Dorsolateral prefrontal cortex (tissue), 120 donors: ENCODE measurements at regions of chr20 and their contacts with region 1.

Region 1: DNA sequence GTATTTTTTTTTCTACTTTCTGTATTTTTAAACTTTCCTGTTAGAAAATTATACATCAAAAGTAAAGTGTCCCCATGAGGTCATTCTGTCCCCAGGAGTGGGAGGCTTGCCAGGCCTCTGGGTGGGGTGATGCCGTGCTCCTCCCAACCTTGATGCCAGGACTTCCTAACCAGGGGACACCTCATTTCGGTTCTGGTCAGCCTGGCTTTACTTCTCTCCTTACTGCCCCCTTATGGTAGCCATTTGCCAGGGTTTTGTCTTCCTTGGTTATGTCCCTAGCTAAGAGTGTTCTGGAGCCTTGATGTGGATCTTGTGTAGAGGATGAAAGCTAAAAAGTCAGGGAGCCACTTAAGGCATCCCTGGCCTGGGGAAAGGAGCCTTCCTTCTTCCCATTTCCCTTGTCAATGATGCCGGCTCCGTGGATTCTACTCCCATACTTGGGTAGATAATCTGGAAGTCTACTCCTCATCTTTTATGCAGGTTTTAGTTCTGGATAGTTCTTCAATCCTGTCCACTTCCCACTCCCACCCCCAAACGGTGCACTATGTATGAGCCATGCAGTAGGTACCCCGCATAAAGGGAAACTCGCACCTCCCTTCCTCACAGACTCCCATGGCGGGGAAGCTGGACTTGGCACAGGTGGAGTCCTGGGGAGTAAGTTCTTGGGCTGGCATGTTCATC is 164.1 kb upstream of the SALL4 start:
- DNase-seq: peak in 4 of 10 donors; percentile 12 to 43 (median 39)
- H3K4me3 ChIP-seq: no peak overlapping the region
- H3K27ac ChIP-seq: no peak overlapping the region
- H3K27me3 ChIP-seq: no peaks in the 10 kb centered on the region
- CTCF ChIP-seq: peak in 55 of 56 donors; percentile 20 to 72 (median 60)

Region 2: GRCh38 chr20:51639206-51639832 is 327.1 kb before region 1 on chr20:
- intact Hi-C with region 1: loop called in 1 of 2 experiments (anchors 5 kb)
- DNase-seq: peak in 9 of 10 donors; percentile 52 to 79 (median 69)
- H3K4me3 ChIP-seq: no peak overlapping the region
- H3K27ac ChIP-seq: peak overlapping the region in 2 of 59 donors; percentile 14 to 43
- H3K27me3 ChIP-seq: no peaks in the 10 kb centered on the region
- CTCF ChIP-seq: peak; percentile 39 to 90 (median 83)

Region 3: DNA sequence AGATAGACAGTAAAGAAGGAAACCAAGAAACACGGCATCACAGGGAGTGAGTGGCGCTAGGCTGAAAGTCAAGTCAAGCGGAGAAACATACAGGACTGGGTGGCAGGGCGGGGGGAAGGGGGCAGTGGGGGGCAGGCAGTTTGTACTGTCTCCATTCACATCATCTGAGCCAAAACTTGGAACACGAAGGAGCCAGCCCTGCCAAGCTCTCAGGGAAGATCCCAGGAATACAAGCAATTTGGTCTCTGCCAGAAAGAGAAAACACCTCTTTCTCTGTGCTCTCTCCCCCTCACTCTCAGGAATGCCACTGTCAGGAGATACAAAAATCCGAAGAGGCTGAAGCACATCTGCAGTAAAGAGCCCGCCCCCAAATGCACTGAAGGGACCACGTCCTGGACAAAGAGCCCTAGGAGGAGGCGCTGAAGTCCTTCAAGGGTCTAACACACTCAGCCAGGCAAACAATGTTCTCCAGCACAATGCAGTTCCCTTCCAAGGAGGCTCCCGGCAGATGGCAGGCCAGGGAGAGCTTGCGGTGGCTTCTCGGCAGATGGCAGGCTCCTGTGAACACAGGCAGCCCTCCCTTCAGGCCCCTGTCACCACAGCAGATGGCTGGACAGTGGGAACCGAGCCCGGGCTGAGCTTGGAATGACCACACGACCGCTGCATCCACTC is 288.3 kb before region 1 on chr20:
- intact Hi-C with region 1: loop called in 1 of 2 experiments (anchors 10 kb)
- DNase-seq: peak; percentile 77 to 95 (median 86)
- H3K4me3 ChIP-seq: peak overlapping the region in 6 of 59 donors; percentile 2 to 24 (median 12)
- H3K27ac ChIP-seq: peak overlapping the region in 57 of 59 donors; percentile 3 to 88 (median 69)
- H3K27me3 ChIP-seq: no peaks in the 10 kb centered on the region
- CTCF ChIP-seq: peak in 54 of 56 donors; percentile 33 to 78 (median 60)

Region 4: DNA sequence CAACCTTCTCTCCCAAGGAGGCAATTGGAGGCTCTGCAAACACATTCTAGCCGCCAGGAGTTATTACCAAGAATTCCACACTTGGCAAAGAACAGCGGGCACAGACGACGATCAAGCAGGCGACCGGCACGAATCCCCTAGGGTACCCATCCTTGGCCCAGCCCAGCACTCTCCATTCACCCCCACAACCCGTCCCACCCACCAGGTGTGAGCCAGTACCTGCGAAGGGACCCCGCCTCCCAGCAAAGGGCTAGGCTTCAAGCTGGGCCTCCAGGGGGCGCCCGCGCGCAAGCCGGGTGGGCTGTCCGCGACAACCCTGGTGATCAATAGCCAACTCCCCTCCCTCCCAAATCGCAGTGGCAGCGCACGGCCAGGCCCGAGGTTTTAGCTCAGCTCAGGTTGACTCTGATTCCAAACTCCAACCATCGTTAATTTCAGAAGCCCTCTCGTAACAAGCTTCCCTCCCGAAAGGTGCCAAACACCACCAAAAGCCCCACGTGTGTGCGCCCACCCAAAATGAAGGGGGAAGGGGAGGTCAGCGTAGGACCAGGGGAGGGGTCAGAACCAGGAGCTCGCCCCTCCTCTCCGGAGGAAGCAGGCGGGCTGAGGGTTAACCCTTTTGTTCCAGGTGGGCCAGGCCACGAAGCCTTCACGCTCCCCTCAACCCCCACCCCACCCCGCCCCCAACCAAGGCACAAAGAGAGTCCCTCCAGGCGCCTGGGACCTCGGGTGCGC is 166.2 kb before region 1 on chr20:
- intact Hi-C with region 1: loop called in 1 of 2 experiments (anchors 10 kb)
- DNase-seq: peak in 6 of 10 donors; percentile 18 to 73 (median 44)
- H3K4me3 ChIP-seq: peak overlapping the region; percentile 29 to 77 (median 62)
- H3K27ac ChIP-seq: no peak overlapping the region
- H3K27me3 ChIP-seq: peaks cover 0 to 68% (median 26%) of the 10 kb centered on the region in 45 donors
- CTCF ChIP-seq: peak; percentile 40 to 88 (median 74)

Region 5: GRCh38 chr20:52230409-52230808 is 264.0 kb after region 1 on chr20:
- intact Hi-C with region 1: no loop called
- DNase-seq: no peak
- H3K4me3 ChIP-seq: no peak overlapping the region
- H3K27ac ChIP-seq: no peak overlapping the region
- H3K27me3 ChIP-seq: peaks cover 0 to 17% (median 0%) of the 10 kb centered on the region in 45 donors
- CTCF ChIP-seq: peak in 1 of 56 donors; percentile 3